ENCODE measurements at regions of chr1 and their contacts with region 1.

Region 1: GRCh38 chr1:235614442-235614954 is 35.1 kb downstream of the GNG4 start:
- DNase-seq: no peak
- CTCF ChIP-seq: no peak

Region 2: DNA sequence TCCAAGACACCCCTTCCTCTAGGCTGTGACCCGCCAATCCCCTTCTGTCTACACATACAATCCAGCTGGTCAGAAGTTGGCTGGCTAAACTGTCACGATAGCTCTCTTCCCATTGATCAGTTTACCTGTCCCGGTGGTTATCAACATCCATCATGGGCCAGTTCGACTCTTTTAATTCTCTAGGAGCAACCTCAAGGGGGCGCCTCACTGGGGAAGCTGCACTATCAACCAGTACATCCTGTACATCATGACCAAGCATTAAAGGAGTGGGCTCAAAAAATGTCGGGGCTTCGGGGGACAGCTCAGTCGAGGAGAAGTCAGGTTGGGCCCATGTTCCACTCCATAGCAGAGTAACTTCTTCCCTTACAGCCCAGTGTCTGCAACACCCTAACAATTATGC is 57.0 kb before region 1 on chr1:
- CTCF ChIA-PET with region 1: no interaction called
- POLR2A ChIA-PET with region 1: no interaction called
- DNase-seq: no peak
- CTCF ChIP-seq: no peak

Region 3: DNA sequence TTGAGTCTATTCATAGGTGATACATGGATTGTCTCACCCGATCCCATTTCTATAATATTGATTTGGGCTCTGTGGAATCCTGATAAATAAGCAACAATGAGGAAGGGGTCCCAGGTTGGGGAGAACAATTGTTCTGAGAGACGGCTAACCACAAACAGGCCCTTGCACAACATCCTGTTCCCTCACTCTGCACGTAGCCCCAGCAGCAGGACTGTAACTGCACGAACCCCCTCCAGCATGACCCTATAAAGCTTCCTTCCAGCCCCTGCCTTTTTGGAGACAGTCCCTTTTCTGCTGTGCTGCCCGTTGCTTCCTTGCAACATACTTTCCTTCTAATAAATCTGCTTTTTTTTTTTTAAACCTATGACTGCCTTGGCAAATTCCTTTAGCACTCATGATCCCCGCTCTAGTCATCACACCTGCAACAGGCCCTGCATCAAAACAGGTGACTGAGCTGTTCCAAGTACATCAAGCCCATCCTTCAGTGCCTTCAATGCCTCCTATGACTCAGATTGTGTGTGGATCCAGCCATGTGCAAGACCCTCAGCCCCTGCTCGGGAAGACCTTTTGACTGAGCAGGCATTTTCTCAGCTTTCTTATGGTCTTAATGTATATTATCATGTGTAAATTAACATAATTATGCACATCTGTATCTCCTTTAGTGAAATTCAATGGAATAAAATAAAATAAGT is 46.5 kb before region 1 on chr1:
- CTCF ChIA-PET with region 1: no interaction called
- POLR2A ChIA-PET with region 1: no interaction called
- DNase-seq: no peak
- CTCF ChIP-seq: no peak

Region 4: DNA sequence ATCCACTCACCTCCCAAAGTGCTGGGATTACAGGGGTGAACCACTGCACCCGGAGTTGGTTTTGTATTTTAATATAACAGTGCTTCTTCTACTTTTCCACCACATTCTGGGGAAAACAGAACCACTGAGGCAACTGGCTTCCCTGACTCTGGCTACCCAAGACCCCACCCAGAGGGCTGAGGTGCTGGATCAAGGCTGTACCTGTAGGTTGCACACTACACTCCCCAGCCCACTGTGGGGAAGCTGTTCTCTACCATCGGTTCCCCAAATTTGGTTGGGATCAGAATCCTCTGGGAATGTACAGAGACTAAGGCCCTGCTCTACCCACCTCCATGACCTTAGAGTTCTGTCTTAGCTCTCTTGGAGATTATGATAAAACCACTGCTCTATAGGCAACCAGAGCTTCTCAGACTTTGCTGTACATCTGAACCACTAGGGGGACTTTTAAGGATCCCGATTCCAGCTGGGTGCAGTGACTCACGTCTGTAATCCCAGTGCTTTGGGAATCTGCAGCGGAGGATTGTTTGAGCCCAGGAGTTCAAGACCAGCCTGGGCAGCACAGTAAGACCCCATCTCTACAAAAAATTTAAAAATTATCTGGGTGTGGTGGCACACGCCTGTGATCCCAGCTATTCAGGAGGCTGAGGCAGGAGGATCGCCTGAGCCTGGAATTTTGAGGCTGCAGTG is 16.5 kb before region 1 on chr1:
- CTCF ChIA-PET with region 1: interaction called, 20 read pairs
- POLR2A ChIA-PET with region 1: no interaction called
- DNase-seq: no peak
- CTCF ChIP-seq: no peak

Region 5: GRCh38 chr1:236064674-236065508 is 450.4 kb after region 1 on chr1 and contains the start of gene NID1:
- CTCF ChIA-PET with region 1: no interaction called
- POLR2A ChIA-PET with region 1: no interaction called
- DNase-seq: peak; percentile 56
- CTCF ChIP-seq: peak; percentile 36